Activated CD8-positive, alpha-beta T cell treated with anti-CD3 and anti-CD28 coated beads for 36 hours (primary cell): ENCODE measurements at regions of chr7 and their contacts with region 1.

Region 1: DNA sequence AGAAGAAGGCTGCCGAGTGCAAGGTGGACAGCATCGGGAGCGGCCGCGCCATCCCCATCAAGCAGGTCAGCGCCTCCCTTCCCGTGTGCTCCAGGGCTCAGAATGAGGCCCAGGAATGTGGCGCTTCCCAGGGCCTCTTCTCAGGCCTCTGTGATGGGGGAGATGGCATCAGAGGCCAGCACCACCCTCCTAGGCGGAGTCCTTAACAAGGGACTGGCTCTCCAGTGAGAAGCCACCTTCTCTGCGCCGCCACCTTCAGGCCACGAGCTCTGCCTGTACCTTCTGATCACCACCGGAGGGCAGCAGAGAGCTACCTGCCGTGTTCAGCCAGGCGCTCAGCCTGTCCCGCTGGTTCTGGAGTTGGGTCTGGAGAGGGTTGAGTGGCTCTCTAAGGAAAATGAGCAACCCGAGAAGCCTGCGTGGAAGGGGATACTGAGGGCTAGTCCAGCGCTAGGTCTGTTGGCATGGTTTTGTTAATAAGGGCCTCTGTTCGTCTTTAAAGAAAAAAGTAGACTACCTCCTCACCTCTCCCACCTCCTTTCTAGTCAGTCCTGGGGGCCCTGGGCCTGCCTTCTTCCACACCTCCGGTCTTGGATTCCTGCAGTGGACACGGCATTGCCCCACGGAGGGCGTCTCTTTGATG is 37.7 kb downstream of the AGAP3 start:
- DNase-seq: peak; percentile 87
- ATAC-seq: peak; percentile 99
- H3K4me3 Mint-ChIP-seq: no peak overlapping the region
- H3K27ac Mint-ChIP-seq: no peak overlapping the region
- H3K4me1 Mint-ChIP-seq: no peaks in the 10 kb centered on the region
- H3K27me3 Mint-ChIP-seq: no peaks in the 10 kb centered on the region
- CTCF ChIP-seq: peak; percentile 94

Region 2: DNA sequence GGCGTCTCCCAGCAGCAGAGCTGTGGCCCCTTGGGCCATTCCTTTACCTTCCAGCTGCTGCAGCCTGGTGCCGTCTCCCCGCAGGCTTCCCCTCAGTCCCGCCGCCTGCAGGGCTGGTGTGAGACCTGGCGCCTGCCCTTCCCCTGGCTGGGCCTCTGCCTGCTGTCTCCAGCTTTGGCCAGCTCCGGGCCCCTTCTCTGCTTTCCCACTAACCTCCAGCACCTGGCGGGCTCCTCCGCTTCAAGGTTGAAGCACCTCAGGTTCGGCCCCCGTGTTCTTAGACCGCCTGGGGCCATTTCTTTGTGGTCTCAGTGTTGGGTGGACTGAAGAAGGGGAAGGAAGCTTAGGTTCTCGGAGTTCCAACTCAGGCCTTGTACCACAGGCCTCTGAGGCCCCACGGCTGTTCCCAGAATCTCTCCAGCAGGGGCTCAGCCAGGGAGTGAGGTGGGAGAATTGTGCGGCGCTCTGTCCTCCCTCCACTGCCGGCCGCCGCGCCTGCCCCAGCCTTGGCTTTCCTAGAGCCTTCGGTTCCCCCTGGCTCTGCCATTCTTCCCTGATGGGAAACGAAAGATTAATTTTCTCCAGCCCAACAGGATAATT is 13.2 kb after region 1 on chr7:
- CTCF ChIA-PET with region 1: interaction called, 23 read pairs
- POLR2A ChIA-PET with region 1: no interaction called
- intact Hi-C with region 1: no loop called
- DNase-seq: no peak
- ATAC-seq: no peak
- H3K4me3 Mint-ChIP-seq: no peak overlapping the region
- H3K27ac Mint-ChIP-seq: no peak overlapping the region
- H3K4me1 Mint-ChIP-seq: no peaks in the 10 kb centered on the region
- H3K27me3 Mint-ChIP-seq: no peaks in the 10 kb centered on the region
- CTCF ChIP-seq: no peak

Region 3: DNA sequence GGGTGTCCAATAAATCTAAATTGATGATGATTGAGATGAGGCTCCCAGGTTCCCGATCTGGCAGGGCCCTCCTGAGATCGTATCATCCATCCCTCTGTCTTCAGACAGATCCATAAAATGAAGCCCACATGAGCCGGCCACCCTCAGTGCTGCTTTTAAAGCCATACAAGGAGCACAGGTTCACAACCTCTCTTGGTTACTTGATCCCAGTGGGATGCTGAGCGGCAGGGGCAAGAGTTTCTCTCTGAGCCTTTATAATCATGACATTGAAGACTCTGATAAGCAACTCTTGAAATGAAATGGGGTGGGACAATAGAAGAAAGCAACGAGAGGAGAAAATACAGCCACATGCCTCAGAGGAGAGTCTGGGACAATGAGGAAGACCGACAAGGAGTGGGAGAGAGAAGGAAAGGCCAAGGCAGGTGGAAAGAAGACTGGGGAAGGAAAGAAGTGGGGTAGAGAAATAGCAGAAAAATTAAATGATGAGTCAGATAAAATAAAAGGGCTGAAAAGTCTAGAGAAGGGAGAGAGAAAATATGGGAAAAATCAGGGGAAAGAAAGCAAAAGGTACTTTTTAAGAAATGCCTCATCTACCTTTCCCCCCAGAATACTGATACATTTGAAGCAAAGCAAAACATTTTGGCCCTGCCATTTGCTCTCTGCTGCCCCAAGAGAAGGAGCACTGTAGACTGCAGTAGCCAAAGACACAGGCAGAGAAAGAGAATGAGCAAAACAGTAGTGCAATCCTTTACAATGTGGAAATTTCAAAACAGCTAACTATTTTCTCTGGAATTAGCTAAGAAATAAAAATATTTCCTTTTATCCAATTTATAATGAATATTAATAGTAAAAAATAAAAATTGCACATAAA is 28.9 kb after region 1 on chr7:
- CTCF ChIA-PET with region 1: interaction called, 11 read pairs
- POLR2A ChIA-PET with region 1: no interaction called
- intact Hi-C with region 1: no loop called
- DNase-seq: no peak
- ATAC-seq: no peak
- H3K4me3 Mint-ChIP-seq: no peak overlapping the region
- H3K27ac Mint-ChIP-seq: no peak overlapping the region
- H3K4me1 Mint-ChIP-seq: no peaks in the 10 kb centered on the region
- H3K27me3 Mint-ChIP-seq: peaks cover 27% of the 10 kb centered on the region
- CTCF ChIP-seq: no peak

Region 4: GRCh38 chr7:151172273-151173141 is 48.6 kb after region 1 on chr7:
- CTCF ChIA-PET with region 1: interaction called, 16 read pairs
- POLR2A ChIA-PET with region 1: interaction called, 3 read pairs
- intact Hi-C with region 1: loop called (anchors 1 kb)
- DNase-seq: peak; percentile 84
- ATAC-seq: peak; percentile 88
- H3K4me3 Mint-ChIP-seq: no peak overlapping the region
- H3K27ac Mint-ChIP-seq: no peak overlapping the region
- H3K4me1 Mint-ChIP-seq: peaks cover 3% of the 10 kb centered on the region
- H3K27me3 Mint-ChIP-seq: peaks cover 53% of the 10 kb centered on the region
- CTCF ChIP-seq: peak; percentile 100

Region 5: GRCh38 chr7:151286148-151286547 is 162.2 kb after region 1 on chr7:
- CTCF ChIA-PET with region 1: no interaction called
- POLR2A ChIA-PET with region 1: no interaction called
- intact Hi-C with region 1: no loop called
- DNase-seq: peak; percentile 64
- ATAC-seq: peak; percentile 83
- H3K4me3 Mint-ChIP-seq: no peak overlapping the region
- H3K27ac Mint-ChIP-seq: no peak overlapping the region
- H3K4me1 Mint-ChIP-seq: peaks cover 6% of the 10 kb centered on the region
- H3K27me3 Mint-ChIP-seq: peaks cover 5% of the 10 kb centered on the region
- CTCF ChIP-seq: no peak